ENCODE measurements at regions of chr17 and their contacts with region 1.

Region 1: GRCh38 chr17:35432176-35433074 is at the start of gene SLFN12:
- DNase-seq: peak; percentile 47 to 84
- ATAC-seq: peak; percentile 83 to 90 (median 89)
- H3K4me3 ChIP-seq: peak within 1 kb of the TSS; percentile 62
- H3K4me3 Mint-ChIP-seq: peak within 1 kb of the TSS; percentile 99
- H3K27ac ChIP-seq: peak within 1 kb of the TSS; percentile 55
- H3K27ac Mint-ChIP-seq: peak within 1 kb of the TSS; percentile 95 to 96
- H3K4me1 ChIP-seq: peaks cover 33% of the 10 kb centered on the region
- H3K4me1 Mint-ChIP-seq: peaks cover 63% of the 10 kb centered on the region in 2 donors
- H3K27me3 ChIP-seq: no peaks in the 10 kb centered on the region
- H3K27me3 Mint-ChIP-seq: no peaks in the 10 kb centered on the region
- CTCF ChIP-seq: no peak
- total RNA-seq, gene SLFN12: 18.6 to 30.9 (median 21.8) TPM

Region 2: GRCh38 chr17:35161281-35161761 is 271.1 kb before region 1 on chr17:
- intact Hi-C with region 1: loop called (anchors 5 kb)
- DNase-seq: peak; percentile 37 to 74
- ATAC-seq: peak; percentile 69 to 81 (median 77)
- H3K4me3 ChIP-seq: peak overlapping the region; percentile 14
- H3K4me3 Mint-ChIP-seq: peak overlapping the region; percentile 79
- H3K27ac ChIP-seq: peak overlapping the region; percentile 85
- H3K27ac Mint-ChIP-seq: peak overlapping the region; percentile 84 to 87
- H3K4me1 ChIP-seq: peaks cover 40% of the 10 kb centered on the region
- H3K4me1 Mint-ChIP-seq: peaks cover 37 to 43% of the 10 kb centered on the region in 2 donors
- H3K27me3 ChIP-seq: no peaks in the 10 kb centered on the region
- H3K27me3 Mint-ChIP-seq: no peaks in the 10 kb centered on the region
- CTCF ChIP-seq: no peak

Region 3: DNA sequence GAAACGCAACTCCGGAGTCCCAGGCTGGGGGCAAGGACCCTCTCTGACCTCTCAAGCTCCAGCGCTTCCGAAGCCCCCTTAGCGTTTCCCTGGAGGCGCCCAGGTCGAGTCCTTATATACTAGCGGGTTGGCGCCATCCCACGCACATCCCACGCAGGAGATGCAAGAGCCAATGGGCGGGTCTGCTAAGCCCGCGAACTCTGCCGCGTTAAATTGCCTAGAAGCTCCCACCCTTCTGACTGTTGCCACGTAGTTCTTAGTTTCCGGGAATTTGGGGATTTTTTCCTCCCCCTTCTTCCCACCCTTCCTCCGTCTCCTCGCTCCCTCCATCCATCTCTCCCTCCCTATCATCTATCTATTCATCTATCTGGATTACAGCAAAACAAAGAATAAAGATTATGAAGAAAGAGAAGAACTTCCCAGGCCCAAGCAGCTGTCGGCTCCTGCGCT is 58.9 kb before region 1 on chr17 and contains the start of gene SLFN11:
- intact Hi-C with region 1: loop called (anchors 5 kb)
- DNase-seq: peak; percentile 62 to 93
- ATAC-seq: peak; percentile 78 to 86 (median 83)
- H3K4me3 ChIP-seq: peak within 1 kb of the TSS; percentile 67
- H3K4me3 Mint-ChIP-seq: peak within 1 kb of the TSS; percentile 98
- H3K27ac ChIP-seq: peak within 1 kb of the TSS; percentile 88
- H3K27ac Mint-ChIP-seq: peak within 1 kb of the TSS; percentile 95 to 97
- H3K4me1 ChIP-seq: peaks cover 10% of the 10 kb centered on the region
- H3K4me1 Mint-ChIP-seq: peaks cover 23 to 37% of the 10 kb centered on the region in 2 donors
- H3K27me3 ChIP-seq: no peaks in the 10 kb centered on the region
- H3K27me3 Mint-ChIP-seq: no peaks in the 10 kb centered on the region
- CTCF ChIP-seq: no peak
- total RNA-seq, gene SLFN11: 22.9 to 31.8 (median 26.8) TPM

Region 4: DNA sequence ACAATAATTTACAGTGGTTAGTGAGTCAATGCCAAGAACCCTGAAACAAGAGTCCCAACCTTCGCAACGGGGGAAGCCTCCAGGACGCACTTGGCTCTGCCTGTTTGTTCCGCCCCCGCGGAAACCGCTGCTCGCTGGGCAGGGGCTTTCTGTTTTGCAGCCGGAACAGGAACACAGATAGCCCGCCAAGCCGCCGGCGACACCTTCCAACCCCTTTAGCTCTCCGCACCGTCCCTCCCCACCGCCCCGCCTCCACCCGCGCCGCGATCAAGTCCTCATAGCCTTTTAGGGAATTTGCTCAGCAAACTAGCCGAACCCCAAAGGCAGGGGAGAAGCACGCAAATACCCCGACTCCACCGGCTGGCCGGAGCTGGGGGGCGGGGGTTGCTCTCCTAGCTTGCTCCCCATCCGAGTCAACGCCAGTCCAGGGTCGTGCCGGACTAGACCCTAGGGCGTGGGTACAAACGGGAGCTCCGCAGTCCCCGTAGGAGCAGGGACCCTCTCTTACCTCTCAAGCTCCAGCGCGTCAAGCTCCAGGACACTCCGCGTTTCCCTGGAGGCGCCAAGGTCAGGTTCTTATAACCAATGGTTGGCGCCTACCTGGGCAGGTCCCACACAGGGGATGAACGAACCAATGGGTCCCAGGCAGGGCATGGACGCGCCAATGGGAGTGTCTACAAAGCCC is 15.9 kb after region 1 on chr17 and contains the start of gene SLFN13:
- intact Hi-C with region 1: loop called (anchors 1 kb)
- DNase-seq: peak; percentile 80 to 91
- ATAC-seq: peak; percentile 79 to 91 (median 86)
- H3K4me3 ChIP-seq: peak within 1 kb of the TSS; percentile 91
- H3K4me3 Mint-ChIP-seq: peak within 1 kb of the TSS; percentile 98
- H3K27ac ChIP-seq: peak within 1 kb of the TSS; percentile 97
- H3K27ac Mint-ChIP-seq: peak within 1 kb of the TSS; percentile 96 to 98
- H3K4me1 ChIP-seq: peaks cover 28% of the 10 kb centered on the region
- H3K4me1 Mint-ChIP-seq: peaks cover 44 to 46% of the 10 kb centered on the region in 2 donors
- H3K27me3 ChIP-seq: no peaks in the 10 kb centered on the region
- H3K27me3 Mint-ChIP-seq: no peaks in the 10 kb centered on the region
- CTCF ChIP-seq: no peak
- total RNA-seq, gene SLFN13: 85.9 to 182 (median 129) TPM

Region 5: DNA sequence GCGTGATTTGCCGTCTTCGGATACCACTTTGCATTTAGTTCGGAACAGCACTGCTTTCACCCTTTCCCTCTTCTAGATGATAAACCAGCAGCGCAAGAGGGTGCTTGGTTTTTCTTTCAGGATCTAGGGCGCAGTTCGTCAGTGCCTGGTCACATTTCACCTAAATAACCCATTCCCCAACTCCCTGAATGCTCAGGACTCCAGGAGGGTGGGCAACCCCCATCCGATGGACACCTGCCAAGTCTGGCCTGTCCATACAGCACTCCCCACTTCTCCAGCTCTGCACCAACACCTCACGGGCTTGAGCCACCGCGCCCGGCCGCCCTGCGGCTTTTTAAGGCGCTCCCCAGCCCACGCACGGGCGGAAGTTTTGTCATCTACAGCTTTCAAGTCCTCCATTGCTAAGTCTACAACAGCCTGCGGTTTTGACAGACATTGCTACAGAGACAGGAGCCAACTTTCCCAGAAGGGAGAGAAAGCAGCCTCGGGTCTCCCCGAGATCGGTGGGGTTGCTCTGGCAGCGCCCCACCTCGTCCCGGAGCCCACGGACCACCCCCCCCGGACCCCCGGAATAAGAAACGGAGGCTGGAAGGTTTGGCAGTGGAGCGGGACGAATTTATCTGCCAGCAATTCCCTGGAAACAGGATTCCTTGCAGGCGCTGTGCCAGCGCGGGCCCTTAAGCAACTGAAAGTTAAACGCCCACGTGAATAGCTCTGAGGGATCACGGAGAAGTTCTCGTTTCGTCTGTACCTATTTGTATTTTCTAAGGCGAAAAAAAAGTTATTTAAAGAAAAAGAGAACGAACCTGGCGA is 54.7 kb after region 1 on chr17:
- intact Hi-C with region 1: loop called (anchors 2 kb)
- DNase-seq: peak; percentile 72 to 87
- ATAC-seq: peak; percentile 50 to 77 (median 72)
- H3K4me3 ChIP-seq: peak overlapping the region; percentile 86
- H3K4me3 Mint-ChIP-seq: peak overlapping the region; percentile 97
- H3K27ac ChIP-seq: peak overlapping the region; percentile 95
- H3K27ac Mint-ChIP-seq: peak overlapping the region; percentile 94 to 97
- H3K4me1 ChIP-seq: peaks cover 35% of the 10 kb centered on the region
- H3K4me1 Mint-ChIP-seq: peaks cover 85 to 88% of the 10 kb centered on the region in 2 donors
- H3K27me3 ChIP-seq: no peaks in the 10 kb centered on the region
- H3K27me3 Mint-ChIP-seq: no peaks in the 10 kb centered on the region
- CTCF ChIP-seq: no peak

Region 6: DNA sequence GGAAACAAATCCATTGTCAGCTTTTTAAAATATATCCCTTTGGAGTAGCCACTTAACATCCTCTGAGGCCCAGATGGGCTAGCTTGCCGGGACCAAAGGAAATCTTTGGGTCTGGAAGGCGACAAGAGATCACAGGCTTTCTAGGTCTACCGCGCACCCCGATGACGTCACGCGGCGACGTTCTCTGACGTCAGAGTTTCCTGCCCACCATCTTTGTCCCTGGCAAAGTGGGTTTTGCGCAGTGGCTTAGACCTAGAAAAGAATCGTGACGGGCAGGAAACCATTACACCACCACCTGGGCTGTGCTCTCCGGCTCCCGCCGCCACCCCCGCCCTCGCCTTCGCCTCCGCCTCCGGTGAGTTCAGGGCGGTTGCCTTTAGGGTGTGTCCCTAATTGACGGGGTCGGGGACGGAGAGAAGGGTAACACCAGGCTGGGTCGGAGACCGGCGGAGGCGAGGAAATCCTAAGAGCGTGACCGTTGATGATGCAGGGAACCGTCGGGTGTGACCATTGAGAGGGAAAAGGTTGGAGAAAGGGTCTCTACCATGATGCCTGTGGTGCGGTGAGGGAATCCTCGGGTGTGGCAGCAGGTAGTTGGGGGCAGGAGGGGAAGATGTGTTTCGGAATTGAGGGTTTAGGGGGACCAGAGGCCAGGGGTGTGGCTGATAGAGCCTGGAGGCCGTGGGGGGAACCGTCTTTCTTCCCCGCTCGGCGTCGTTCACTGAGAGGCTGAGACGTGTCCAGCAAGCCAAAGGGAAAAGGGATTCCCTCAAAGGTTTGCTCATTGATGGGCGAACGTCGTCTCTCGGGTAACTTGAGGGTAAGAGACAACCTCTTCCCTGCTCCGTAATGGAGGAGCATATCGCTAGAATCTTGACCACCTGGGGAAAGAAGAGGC is 154.9 kb after region 1 on chr17 and contains the start of gene AP2B1:
- intact Hi-C with region 1: loop called (anchors 5 kb)
- DNase-seq: peak; percentile 99
- ATAC-seq: peak; percentile 94 to 98 (median 98)
- H3K4me3 ChIP-seq: peak within 1 kb of the TSS; percentile 70
- H3K4me3 Mint-ChIP-seq: peak within 1 kb of the TSS; percentile 94
- H3K27ac ChIP-seq: peak within 1 kb of the TSS; percentile 88
- H3K27ac Mint-ChIP-seq: peak within 1 kb of the TSS; percentile 94 to 100
- H3K4me1 ChIP-seq: peaks cover 13% of the 10 kb centered on the region
- H3K4me1 Mint-ChIP-seq: peaks cover 28 to 33% of the 10 kb centered on the region in 2 donors
- H3K27me3 ChIP-seq: no peaks in the 10 kb centered on the region
- H3K27me3 Mint-ChIP-seq: peaks cover 0 to 9% of the 10 kb centered on the region in 2 donors
- CTCF ChIP-seq: no peak
- total RNA-seq, gene AP2B1: 111 to 148 (median 139) TPM

Measured in natural killer cell (primary cell).